PC-9 (cell line): ENCODE measurements at regions of chr12 and their contacts with region 1.

Region 1: DNA sequence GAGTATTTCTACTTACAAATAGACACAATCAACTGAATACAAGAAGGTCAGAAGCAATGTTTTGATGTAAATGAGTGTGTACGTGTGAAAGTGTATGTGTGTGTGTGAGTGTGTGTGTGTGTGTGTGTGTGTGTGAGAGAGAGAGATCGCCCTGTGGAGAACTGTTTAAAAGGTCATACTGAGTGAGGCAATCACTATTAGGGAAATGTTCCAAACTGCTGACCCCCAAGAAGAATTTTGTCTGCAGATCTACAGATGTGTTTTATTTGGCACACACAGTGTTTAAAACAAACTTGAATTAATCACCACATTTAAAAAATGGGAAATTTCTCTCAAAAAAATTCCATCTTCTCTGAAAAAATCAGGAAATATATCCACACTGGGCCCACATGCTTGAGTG is 1069.1 kb downstream of the SLC6A15 start:
- DNase-seq: no peak
- H3K4me3 ChIP-seq: no peak overlapping the region
- H3K27ac ChIP-seq: no peak overlapping the region
- H3K4me1 ChIP-seq: no peaks in the 10 kb centered on the region
- H3K27me3 ChIP-seq: no peaks in the 10 kb centered on the region
- CTCF ChIP-seq: no peak

Region 2: DNA sequence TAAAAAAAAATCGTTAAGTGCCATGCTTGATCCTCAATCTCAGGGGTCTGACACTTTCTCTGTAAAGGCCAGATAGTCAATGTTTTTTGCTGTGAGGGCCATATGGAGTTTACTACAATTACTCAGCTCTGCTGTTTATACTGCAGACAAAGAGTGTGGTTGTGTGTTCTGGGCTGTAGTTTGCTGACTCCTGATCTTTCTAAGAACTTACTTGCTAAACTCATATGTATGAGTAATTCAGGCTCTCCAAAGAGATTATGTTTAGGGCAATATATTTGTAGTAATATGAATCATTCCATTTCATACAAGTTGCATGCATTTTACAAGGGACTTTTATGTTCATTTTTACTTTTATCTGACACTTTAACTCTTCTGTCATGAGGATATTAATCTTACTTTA is 968.6 kb before region 1 on chr12:
- CTCF ChIA-PET with region 1: no interaction called
- POLR2A ChIA-PET with region 1: interaction called, 12 read pairs
- intact Hi-C with region 1: no loop called
- DNase-seq: no peak
- H3K4me3 ChIP-seq: no peak overlapping the region
- H3K27ac ChIP-seq: no peak overlapping the region
- H3K4me1 ChIP-seq: no peaks in the 10 kb centered on the region
- H3K27me3 ChIP-seq: no peaks in the 10 kb centered on the region
- CTCF ChIP-seq: no peak

Region 3: GRCh38 chr12:83664650-83665049 is 178.9 kb before region 1 on chr12:
- CTCF ChIA-PET with region 1: no interaction called
- POLR2A ChIA-PET with region 1: no interaction called
- intact Hi-C with region 1: no loop called
- DNase-seq: no peak
- H3K4me3 ChIP-seq: no peak overlapping the region
- H3K27ac ChIP-seq: no peak overlapping the region
- H3K4me1 ChIP-seq: no peaks in the 10 kb centered on the region
- H3K27me3 ChIP-seq: no peaks in the 10 kb centered on the region
- CTCF ChIP-seq: no peak